Activated naive CD8-positive, alpha-beta T cell treated with anti-CD3 and anti-CD28 coated beads, Interleukin-2, amount 10 ng/mL, durations not matched to agents 7 days and 5 days (primary cell): ENCODE measurements at regions of chr2 and their contacts with region 1.

Region 1: GRCh38 chr2:135820003-135820618 is 16.9 kb downstream of the LCT start:
- DNase-seq: peak; percentile 77
- ATAC-seq: peak; percentile 97
- H3K4me3 Mint-ChIP-seq: peak overlapping the region; percentile 76
- H3K27ac Mint-ChIP-seq: peak overlapping the region; percentile 93
- H3K4me1 Mint-ChIP-seq: peaks cover 47% of the 10 kb centered on the region
- H3K27me3 Mint-ChIP-seq: no peaks in the 10 kb centered on the region

Region 2: GRCh38 chr2:135836596-135837270 is 16.6 kb after region 1 on chr2 and contains the start of gene LCT:
- POLR2A ChIA-PET with region 1: interaction called, 12 read pairs
- DNase-seq: no peak
- ATAC-seq: no peak
- H3K4me3 Mint-ChIP-seq: peak within 1 kb of the TSS; percentile 3
- H3K27ac Mint-ChIP-seq: peak within 1 kb of the TSS; percentile 64
- H3K4me1 Mint-ChIP-seq: peaks cover 40% of the 10 kb centered on the region
- H3K27me3 Mint-ChIP-seq: no peaks in the 10 kb centered on the region
- total RNA-seq, gene LCT: 0.14 to 0.39 TPM

Region 3: DNA sequence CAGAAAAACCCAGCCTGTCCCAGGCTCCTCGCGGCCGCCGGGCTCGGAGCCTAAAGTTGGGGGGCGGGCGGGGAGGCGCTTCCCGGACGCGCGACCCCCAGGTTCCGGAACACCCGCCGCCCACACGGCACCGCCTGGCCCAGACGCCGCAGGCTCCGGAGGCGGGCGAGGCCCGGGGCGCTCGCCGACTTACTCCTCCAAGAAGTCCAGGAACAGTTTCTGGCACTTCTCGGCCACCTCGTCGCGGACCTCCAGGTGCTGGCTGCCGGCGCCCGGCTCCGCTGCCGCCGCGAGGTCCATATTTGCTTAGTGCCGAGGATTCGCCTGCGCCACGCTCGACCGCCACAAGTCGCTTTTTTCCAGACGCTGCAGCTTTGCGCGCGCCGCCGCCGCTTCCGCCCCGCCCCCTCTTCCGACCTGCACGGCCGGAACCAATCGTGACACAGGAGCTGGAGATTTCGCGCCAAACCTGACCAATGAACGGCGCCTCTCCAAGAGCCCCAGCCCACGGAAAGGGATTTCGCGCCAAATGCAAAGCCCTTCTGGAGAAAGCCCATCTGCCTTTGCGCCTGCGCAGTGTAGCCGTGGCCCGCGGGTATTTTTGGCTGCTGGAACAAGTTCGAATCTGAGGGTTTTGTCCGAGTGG is 56.1 kb after region 1 on chr2 and contains the start of gene MCM6:
- POLR2A ChIA-PET with region 1: interaction called, 21 read pairs
- DNase-seq: peak; percentile 96
- ATAC-seq: peak; percentile 90
- H3K4me3 Mint-ChIP-seq: peak within 1 kb of the TSS; percentile 94
- H3K27ac Mint-ChIP-seq: peak within 1 kb of the TSS; percentile 95
- H3K4me1 Mint-ChIP-seq: peaks cover 37% of the 10 kb centered on the region
- H3K27me3 Mint-ChIP-seq: no peaks in the 10 kb centered on the region
- total RNA-seq, gene MCM6: 107 to 109 TPM